ENCODE measurements at regions of chr5 and their contacts with region 1.

Region 1: GRCh38 chr5:37724395-37725125 is 115.3 kb downstream of the GDNF start:
- DNase-seq: no peak

Region 2: GRCh38 chr5:37837414-37838032 is 113.0 kb after region 1 on chr5:
- intact Hi-C with region 1: loop called (anchors 5 kb)
- DNase-seq: peak; percentile 76 to 95 (median 89)

Measured in head of caudate nucleus (tissue), 42 donors.